B cell (primary cell): ENCODE measurements at regions of chr10 and their contacts with region 1.

Region 1: GRCh38 chr10:110567201-110568054 is at the start of gene SMC3:
- DNase-seq: peak; percentile 98
- ATAC-seq: peak; percentile 89
- H3K4me3 ChIP-seq: peak within 1 kb of the TSS; percentile 82 to 92 (median 90)
- H3K4me3 Mint-ChIP-seq: peak within 1 kb of the TSS; percentile 91
- H3K27ac ChIP-seq: peak within 1 kb of the TSS; percentile 73 to 90
- H3K27ac Mint-ChIP-seq: peak within 1 kb of the TSS; percentile 98
- H3K4me1 ChIP-seq: peaks cover 24 to 27% of the 10 kb centered on the region in 2 donors
- H3K4me1 Mint-ChIP-seq: peaks cover 31% of the 10 kb centered on the region
- H3K27me3 ChIP-seq: peaks cover 0 to 8% (median 5%) of the 10 kb centered on the region in 4 experiments
- H3K27me3 Mint-ChIP-seq: peaks cover 5% of the 10 kb centered on the region
- CTCF ChIP-seq: no peak
- total RNA-seq, gene SMC3: 44.6 and 45.8 TPM in 2 replicates

Region 2: DNA sequence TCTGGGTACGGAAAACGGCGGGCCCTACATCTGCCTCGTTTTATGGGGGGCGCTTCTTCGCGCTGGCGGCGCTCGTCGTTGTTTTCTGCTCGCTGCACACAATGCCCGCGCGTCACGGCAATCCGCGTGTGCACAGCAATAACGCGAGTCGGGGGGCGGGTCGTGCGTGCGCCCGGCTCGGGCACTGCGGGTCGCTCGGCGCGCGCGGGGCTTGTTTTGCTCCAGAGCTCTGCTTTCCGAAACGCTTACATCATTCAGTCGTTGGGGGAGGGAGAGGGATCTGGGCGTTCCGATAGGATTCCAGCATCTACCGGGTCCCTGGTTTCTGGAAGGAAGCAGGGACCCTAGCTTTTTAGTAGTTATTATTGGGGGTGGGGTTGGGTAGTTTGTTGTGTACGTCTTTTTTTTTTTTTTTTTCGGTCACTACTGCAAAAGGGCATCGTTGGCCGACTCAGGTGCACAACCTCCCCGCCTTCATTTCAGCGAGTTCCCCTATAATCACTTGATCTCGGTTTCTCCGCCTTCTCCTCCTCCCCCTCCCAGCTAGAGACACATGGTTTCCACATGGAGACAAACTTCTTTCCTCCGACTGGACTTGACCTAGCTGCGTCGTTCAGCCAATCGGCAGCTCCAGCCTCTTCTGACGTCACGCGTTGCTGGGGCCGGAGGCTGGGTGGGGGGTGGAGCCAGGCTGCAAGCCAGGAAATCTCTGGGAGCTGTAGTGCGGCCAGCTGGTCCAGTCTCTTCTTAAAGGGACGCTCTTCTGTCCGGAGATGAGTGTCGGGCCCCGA is 356.6 kb before region 1 on chr10:
- CTCF ChIA-PET with region 1: no interaction called
- POLR2A ChIA-PET with region 1: no interaction called
- intact Hi-C with region 1: loop called (anchors 5 kb)
- DNase-seq: peak; percentile 94
- ATAC-seq: peak; percentile 68
- H3K4me3 ChIP-seq: peak overlapping the region; percentile 67 to 90 (median 82)
- H3K4me3 Mint-ChIP-seq: peak overlapping the region; percentile 88
- H3K27ac ChIP-seq: peak overlapping the region; percentile 82 to 85
- H3K27ac Mint-ChIP-seq: peak overlapping the region; percentile 97
- H3K4me1 ChIP-seq: peaks cover 44 to 67% of the 10 kb centered on the region in 2 donors
- H3K4me1 Mint-ChIP-seq: peaks cover 58% of the 10 kb centered on the region
- H3K27me3 ChIP-seq: peaks cover 0 to 18% (median 7%) of the 10 kb centered on the region in 4 experiments
- H3K27me3 Mint-ChIP-seq: peaks cover 4% of the 10 kb centered on the region
- CTCF ChIP-seq: no peak

Region 3: DNA sequence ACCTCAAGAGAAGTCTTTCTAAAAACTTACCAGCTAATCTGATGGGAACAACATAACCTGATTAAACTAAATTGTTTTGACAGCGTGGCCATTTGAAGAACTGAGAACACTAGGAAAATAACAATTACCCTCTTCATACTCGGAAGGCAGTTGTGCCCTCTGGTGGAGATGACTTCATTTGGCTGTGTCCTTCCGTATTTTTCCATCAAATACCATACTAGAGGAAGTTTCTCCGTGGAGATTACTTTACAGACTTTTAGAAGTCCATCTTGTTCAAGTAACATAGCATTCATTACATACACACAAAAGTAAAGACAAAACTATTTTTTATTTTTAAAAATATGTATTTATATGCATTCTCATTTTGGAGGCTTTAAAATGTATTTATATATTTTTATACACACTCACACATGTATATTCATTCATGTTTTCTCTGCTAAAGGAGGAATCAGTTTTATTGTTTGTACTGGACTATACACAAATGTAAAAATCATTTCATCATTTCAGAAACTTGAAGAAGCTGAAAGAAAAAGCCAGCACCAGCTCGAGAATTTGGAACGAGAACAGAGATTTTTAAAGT is 287.9 kb before region 1 on chr10:
- CTCF ChIA-PET with region 1: no interaction called
- POLR2A ChIA-PET with region 1: no interaction called
- intact Hi-C with region 1: no loop called
- DNase-seq: peak; percentile 79
- ATAC-seq: peak; percentile 68
- H3K4me3 ChIP-seq: peak overlapping the region in 1 of 5 experiments; percentile 38
- H3K4me3 Mint-ChIP-seq: peak overlapping the region; percentile 26
- H3K27ac ChIP-seq: no peak overlapping the region
- H3K27ac Mint-ChIP-seq: no peak overlapping the region
- H3K4me1 ChIP-seq: peaks cover 11 to 17% of the 10 kb centered on the region in 2 donors
- H3K4me1 Mint-ChIP-seq: peaks cover 21% of the 10 kb centered on the region
- H3K27me3 ChIP-seq: no peaks in the 10 kb centered on the region
- H3K27me3 Mint-ChIP-seq: no peaks in the 10 kb centered on the region
- CTCF ChIP-seq: peak; percentile 84

Region 4: GRCh38 chr10:110311357-110311949 is 256.0 kb before region 1 on chr10:
- CTCF ChIA-PET with region 1: interaction called, 26 read pairs
- POLR2A ChIA-PET with region 1: no interaction called
- intact Hi-C with region 1: loop called (anchors 1 kb)
- DNase-seq: peak; percentile 73
- ATAC-seq: peak; percentile 78
- H3K4me3 ChIP-seq: no peak overlapping the region
- H3K4me3 Mint-ChIP-seq: no peak overlapping the region
- H3K27ac ChIP-seq: no peak overlapping the region
- H3K27ac Mint-ChIP-seq: no peak overlapping the region
- H3K4me1 ChIP-seq: peaks cover 3% of the 10 kb centered on the region in 2 donors
- H3K4me1 Mint-ChIP-seq: peaks cover 8% of the 10 kb centered on the region
- H3K27me3 ChIP-seq: no peaks in the 10 kb centered on the region
- H3K27me3 Mint-ChIP-seq: peaks cover 4% of the 10 kb centered on the region
- CTCF ChIP-seq: peak; percentile 76

Region 5: DNA sequence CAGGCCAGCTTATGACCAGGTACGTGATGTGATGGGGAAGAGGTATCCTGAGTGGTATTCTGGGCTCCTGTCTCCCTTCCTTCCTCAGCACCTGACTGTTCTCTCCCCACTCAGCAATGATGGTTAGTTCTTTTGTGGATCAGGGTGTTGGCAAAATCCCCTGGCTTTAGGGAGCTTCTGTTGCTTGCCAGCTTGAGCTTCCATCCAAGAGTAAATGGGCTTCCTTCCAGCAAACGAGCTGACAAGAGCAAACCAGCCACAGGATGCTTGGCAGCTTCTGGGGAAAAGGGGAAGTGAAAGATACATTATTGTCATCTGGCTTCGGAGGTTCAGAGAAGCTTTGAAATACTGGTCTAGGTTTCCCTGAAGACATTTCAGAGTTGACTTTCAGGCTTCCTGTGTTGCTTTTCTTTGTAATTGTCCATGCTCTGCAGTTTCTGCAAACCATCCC is 64.6 kb before region 1 on chr10:
- CTCF ChIA-PET with region 1: no interaction called
- POLR2A ChIA-PET with region 1: no interaction called
- intact Hi-C with region 1: loop called (anchors 1 kb)
- DNase-seq: peak; percentile 87
- ATAC-seq: peak; percentile 51
- H3K4me3 ChIP-seq: peak overlapping the region in 1 of 5 experiments; percentile 45
- H3K4me3 Mint-ChIP-seq: peak overlapping the region; percentile 85
- H3K27ac ChIP-seq: peak overlapping the region; percentile 82 to 87
- H3K27ac Mint-ChIP-seq: peak overlapping the region; percentile 90
- H3K4me1 ChIP-seq: peaks cover 54 to 63% of the 10 kb centered on the region in 2 donors
- H3K4me1 Mint-ChIP-seq: peaks cover 67% of the 10 kb centered on the region
- H3K27me3 ChIP-seq: peaks cover 0 to 11% (median 2%) of the 10 kb centered on the region in 4 experiments
- H3K27me3 Mint-ChIP-seq: peaks cover 6% of the 10 kb centered on the region
- CTCF ChIP-seq: no peak

Region 6: GRCh38 chr10:110746254-110746826 is 178.9 kb after region 1 on chr10:
- CTCF ChIA-PET with region 1: no interaction called
- POLR2A ChIA-PET with region 1: no interaction called
- intact Hi-C with region 1: no loop called
- DNase-seq: peak; percentile 70
- ATAC-seq: peak; percentile 68
- H3K4me3 ChIP-seq: no peak overlapping the region
- H3K4me3 Mint-ChIP-seq: no peak overlapping the region
- H3K27ac ChIP-seq: no peak overlapping the region
- H3K27ac Mint-ChIP-seq: no peak overlapping the region
- H3K4me1 ChIP-seq: peaks cover 0 to 6% of the 10 kb centered on the region in 2 donors
- H3K4me1 Mint-ChIP-seq: peaks cover 3% of the 10 kb centered on the region
- H3K27me3 ChIP-seq: peaks cover 0 to 5% (median 0%) of the 10 kb centered on the region in 4 experiments
- H3K27me3 Mint-ChIP-seq: peaks cover 5% of the 10 kb centered on the region
- CTCF ChIP-seq: peak; percentile 96

Region 7: DNA sequence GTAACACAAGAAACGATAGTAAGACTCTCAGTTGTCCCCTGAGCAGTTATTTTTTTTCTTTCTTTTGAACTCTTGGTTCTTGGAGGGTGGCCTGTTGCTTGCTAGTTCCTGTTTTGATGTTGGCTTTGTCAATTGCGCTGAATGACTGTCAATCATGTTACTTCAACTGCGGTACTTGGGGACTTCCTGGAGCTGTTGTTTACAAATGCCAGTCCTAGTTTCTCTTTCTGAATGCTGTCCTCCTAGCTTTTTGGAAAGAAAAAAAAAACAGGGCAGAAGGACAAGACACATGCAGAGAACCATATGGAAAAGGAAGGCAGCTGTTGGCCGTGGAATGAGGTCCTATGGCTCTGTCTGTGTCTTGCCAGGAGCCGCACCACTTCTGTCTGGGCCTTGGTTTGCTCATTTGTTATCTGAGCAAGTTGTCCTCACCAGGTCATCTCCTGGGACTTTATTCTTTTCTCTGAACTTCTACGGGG is 297.3 kb after region 1 on chr10:
- CTCF ChIA-PET with region 1: no interaction called
- POLR2A ChIA-PET with region 1: no interaction called
- intact Hi-C with region 1: loop called (anchors 2 kb)
- DNase-seq: peak; percentile 89
- ATAC-seq: peak; percentile 55
- H3K4me3 ChIP-seq: peak overlapping the region in 4 of 5 experiments; percentile 21 to 60 (median 38)
- H3K4me3 Mint-ChIP-seq: peak overlapping the region; percentile 85
- H3K27ac ChIP-seq: peak overlapping the region; percentile 94 to 96
- H3K27ac Mint-ChIP-seq: peak overlapping the region; percentile 97
- H3K4me1 ChIP-seq: peaks cover 97 to 100% of the 10 kb centered on the region in 2 donors
- H3K4me1 Mint-ChIP-seq: peaks cover 97% of the 10 kb centered on the region
- H3K27me3 ChIP-seq: no peaks in the 10 kb centered on the region
- H3K27me3 Mint-ChIP-seq: no peaks in the 10 kb centered on the region
- CTCF ChIP-seq: no peak

Region 8: DNA sequence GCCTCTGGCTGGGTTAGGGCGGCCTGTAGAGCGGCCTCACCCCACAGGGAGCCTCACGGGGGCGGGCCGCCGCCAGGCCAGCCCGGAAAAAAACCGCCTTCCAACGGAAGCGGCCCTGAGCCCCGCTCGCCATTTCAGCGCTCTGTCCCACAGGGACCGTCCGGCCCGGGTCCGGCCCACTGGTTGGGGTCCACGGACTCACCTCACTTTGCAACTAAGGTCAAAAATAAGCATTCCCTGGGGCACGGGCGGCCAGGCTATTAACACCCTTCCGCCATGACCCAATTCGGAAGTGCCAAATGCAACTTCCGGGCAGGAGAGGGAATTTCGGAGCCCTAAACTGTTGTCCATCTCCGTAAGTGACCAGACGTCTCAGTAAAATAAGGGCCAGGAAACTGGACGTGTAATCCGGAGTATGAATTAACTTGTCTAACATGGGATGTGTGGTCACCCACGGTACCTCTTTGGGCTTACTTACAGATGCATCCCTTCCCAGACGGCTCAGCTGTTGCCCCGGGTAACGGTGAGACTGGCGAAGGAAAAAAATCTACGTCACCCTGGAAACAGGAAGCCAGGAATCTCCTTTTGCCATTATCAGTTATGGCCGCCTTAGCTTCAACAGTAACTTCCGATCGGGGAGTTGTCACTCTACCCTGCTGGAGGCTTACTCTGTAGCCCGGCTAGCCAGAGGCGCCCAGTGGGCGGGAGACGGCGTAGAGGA is 351.4 kb after region 1 on chr10 and contains the start of gene BBIP1:
- CTCF ChIA-PET with region 1: interaction called, 3 read pairs
- POLR2A ChIA-PET with region 1: no interaction called
- intact Hi-C with region 1: loop called (anchors 1 kb)
- DNase-seq: peak; percentile 99
- ATAC-seq: peak; percentile 85
- H3K4me3 ChIP-seq: peak within 1 kb of the TSS; percentile 78 to 100 (median 97)
- H3K4me3 Mint-ChIP-seq: peak within 1 kb of the TSS; percentile 98
- H3K27ac ChIP-seq: peak within 1 kb of the TSS; percentile 95 to 99
- H3K27ac Mint-ChIP-seq: peak within 1 kb of the TSS; percentile 100
- H3K4me1 ChIP-seq: peaks cover 16 to 33% of the 10 kb centered on the region in 2 donors
- H3K4me1 Mint-ChIP-seq: peaks cover 49% of the 10 kb centered on the region
- H3K27me3 ChIP-seq: no peaks in the 10 kb centered on the region
- H3K27me3 Mint-ChIP-seq: no peaks in the 10 kb centered on the region
- CTCF ChIP-seq: no peak
- total RNA-seq, gene BBIP1: 35.1 and 46.1 TPM in 2 replicates